Activated T-helper 2 cell treated with anti-CD3 and anti-CD28 coated beads, Interferon-gamma antibody, Interleukin-2, Interleukin-4, amounts not matched to agents 10 μg/mL and 5 μg/mL and 100 μg/mL, durations not matched to agents 14 hours and 24 hours and 36 hours (primary cell): ENCODE measurements at regions of chr11 and their contacts with region 1.

Region 1: GRCh38 chr11:47552566-47553416 is at the start of gene CELF1:
- DNase-seq: peak; percentile 92
- H3K4me3 Mint-ChIP-seq: peak within 1 kb of the TSS; percentile 100
- H3K27ac Mint-ChIP-seq: peak within 1 kb of the TSS; percentile 95
- H3K4me1 Mint-ChIP-seq: peaks cover 31% of the 10 kb centered on the region
- H3K27me3 Mint-ChIP-seq: no peaks in the 10 kb centered on the region
- total RNA-seq, gene CELF1: 129 and 132 TPM in 2 replicates

Region 2: GRCh38 chr11:47616726-47617416 is 64.1 kb after region 1 on chr11:
- intact Hi-C with region 1: loop called (anchors 10 kb)
- DNase-seq: no peak
- H3K4me3 Mint-ChIP-seq: no peak overlapping the region
- H3K27ac Mint-ChIP-seq: no peak overlapping the region
- H3K4me1 Mint-ChIP-seq: peaks cover 5% of the 10 kb centered on the region
- H3K27me3 Mint-ChIP-seq: no peaks in the 10 kb centered on the region